ENCODE measurements at regions of chr16 and their contacts with region 1.

Region 1: GRCh38 chr16:27972500-27972899 is 91.0 kb downstream of the GSG1L start:
- DNase-seq: peak; percentile 49
- H3K4me3 ChIP-seq: no peak overlapping the region
- H3K27ac ChIP-seq: no peak overlapping the region
- H3K4me1 ChIP-seq: no peaks in the 10 kb centered on the region
- H3K27me3 ChIP-seq: no peaks in the 10 kb centered on the region
- CTCF ChIP-seq: peak; percentile 32 to 55
- POLR2A ChIP-seq: no peak

Region 2: GRCh38 chr16:28218104-28218503 is 245.6 kb after region 1 on chr16:
- CTCF ChIA-PET with region 1: interaction called, 71 read pairs
- POLR2A ChIA-PET with region 1: interaction called, 3 read pairs
- dilution Hi-C with region 1: no loop called
- intact Hi-C with region 1: no loop called
- DNase-seq: peak; percentile 52
- H3K4me3 ChIP-seq: no peak overlapping the region
- H3K27ac ChIP-seq: no peak overlapping the region
- H3K4me1 ChIP-seq: peaks cover 2% of the 10 kb centered on the region
- H3K27me3 ChIP-seq: no peaks in the 10 kb centered on the region
- CTCF ChIP-seq: peak; percentile 31 to 71
- POLR2A ChIP-seq: no peak

Measured in endothelial cell of umbilical vein (primary cell).